ENCODE measurements at regions of chr15 and their contacts with region 1.

Region 1: GRCh38 chr15:94324117-94324826 is 92.9 kb downstream of the MCTP2 start:
- ATAC-seq: peak; percentile 69 to 91 (median 82)
- H3K4me3 ChIP-seq: no peak overlapping the region
- H3K27ac ChIP-seq: no peak overlapping the region
- H3K4me1 ChIP-seq: no peaks in the 10 kb centered on the region

Region 2: GRCh38 chr15:94163999-94164807 is 160.1 kb before region 1 on chr15:
- in situ Hi-C with region 1: loop called in 6 of 9 experiments (anchors 5 to 25 kb)
- ATAC-seq: peak in 6 of 8 experiments; percentile 31 to 91 (median 60)
- H3K4me3 ChIP-seq: no peak overlapping the region
- H3K27ac ChIP-seq: no peak overlapping the region
- H3K4me1 ChIP-seq: peaks cover 0 to 3% of the 10 kb centered on the region in 2 donors

Measured in motor neuron (in vitro differentiated cells).